ENCODE measurements at regions of chr7 and their contacts with region 1.

Region 1: GRCh38 chr7:125814100-125814499 is 884.5 kb upstream of the POT1 start:
- DNase-seq: no peak
- ATAC-seq: no peak
- H3K4me3 ChIP-seq: no peak overlapping the region
- H3K4me3 Mint-ChIP-seq: no peak overlapping the region
- H3K27ac ChIP-seq: no peak overlapping the region
- H3K27ac Mint-ChIP-seq: no peak overlapping the region
- H3K4me1 ChIP-seq: no peaks in the 10 kb centered on the region
- H3K4me1 Mint-ChIP-seq: no peaks in the 10 kb centered on the region
- H3K27me3 ChIP-seq: no peaks in the 10 kb centered on the region
- H3K27me3 Mint-ChIP-seq: no peaks in the 10 kb centered on the region
- CTCF ChIP-seq: no peak

Region 2: GRCh38 chr7:125747966-125748365 is 66.1 kb before region 1 on chr7:
- CTCF ChIA-PET with region 1: no interaction called
- POLR2A ChIA-PET with region 1: no interaction called
- intact Hi-C with region 1: loop called (anchors 10 kb)
- DNase-seq: no peak
- ATAC-seq: no peak
- H3K4me3 ChIP-seq: no peak overlapping the region
- H3K4me3 Mint-ChIP-seq: no peak overlapping the region
- H3K27ac ChIP-seq: no peak overlapping the region
- H3K27ac Mint-ChIP-seq: no peak overlapping the region
- H3K4me1 ChIP-seq: no peaks in the 10 kb centered on the region
- H3K4me1 Mint-ChIP-seq: no peaks in the 10 kb centered on the region
- H3K27me3 ChIP-seq: no peaks in the 10 kb centered on the region
- H3K27me3 Mint-ChIP-seq: no peaks in the 10 kb centered on the region
- CTCF ChIP-seq: no peak

Region 3: DNA sequence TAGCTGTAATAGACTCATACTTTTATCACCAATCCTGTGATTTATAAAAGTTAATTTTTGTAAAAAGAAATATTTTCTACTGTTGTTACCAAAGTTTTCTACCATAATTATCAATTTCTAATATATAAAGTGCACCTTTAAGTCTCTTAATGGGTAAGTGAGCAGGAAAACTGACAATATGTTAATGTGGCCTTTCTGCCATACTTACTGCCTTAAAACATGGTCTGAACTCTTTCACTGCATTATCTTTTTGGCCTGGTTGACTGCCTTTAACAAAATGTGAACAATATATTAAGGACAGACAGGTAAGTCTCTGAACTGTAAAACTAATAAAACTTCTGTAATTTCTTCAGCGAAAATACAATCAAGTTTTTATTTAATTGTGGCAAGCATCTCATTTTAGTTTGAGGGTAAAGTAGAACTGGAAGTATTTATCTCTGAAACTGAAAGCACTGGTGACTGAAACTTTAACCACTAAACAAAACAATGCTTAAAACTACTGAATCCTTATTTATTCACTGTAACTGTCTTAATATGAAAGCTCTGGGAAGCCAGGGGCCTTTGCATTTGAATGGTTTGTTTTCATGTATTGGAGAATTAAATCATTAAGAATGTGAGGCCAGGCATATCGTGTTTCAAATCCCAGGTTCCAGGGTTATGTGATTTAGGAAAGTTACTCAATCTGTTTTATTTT is 64.3 kb after region 1 on chr7:
- CTCF ChIA-PET with region 1: no interaction called
- POLR2A ChIA-PET with region 1: no interaction called
- intact Hi-C with region 1: no loop called
- DNase-seq: no peak
- ATAC-seq: no peak
- H3K4me3 ChIP-seq: no peak overlapping the region
- H3K4me3 Mint-ChIP-seq: no peak overlapping the region
- H3K27ac ChIP-seq: no peak overlapping the region
- H3K27ac Mint-ChIP-seq: no peak overlapping the region
- H3K4me1 ChIP-seq: no peaks in the 10 kb centered on the region
- H3K4me1 Mint-ChIP-seq: no peaks in the 10 kb centered on the region
- H3K27me3 ChIP-seq: no peaks in the 10 kb centered on the region
- H3K27me3 Mint-ChIP-seq: no peaks in the 10 kb centered on the region
- CTCF ChIP-seq: no peak

Measured in B cell (primary cell).